ENCODE measurements at regions of chr10 and their contacts with region 1.

Region 1: GRCh38 chr10:68901104-68901927 is at the start of gene DDX50:
- DNase-seq: peak; percentile 100
- H3K4me3 ChIP-seq: peak within 1 kb of the TSS; percentile 67
- H3K4me3 Mint-ChIP-seq: peak within 1 kb of the TSS; percentile 96
- H3K27ac Mint-ChIP-seq: peak within 1 kb of the TSS; percentile 99
- H3K4me1 ChIP-seq: peaks cover 12% of the 10 kb centered on the region
- H3K4me1 Mint-ChIP-seq: peaks cover 40% of the 10 kb centered on the region
- H3K27me3 ChIP-seq: no peaks in the 10 kb centered on the region
- H3K27me3 Mint-ChIP-seq: no peaks in the 10 kb centered on the region
- CTCF ChIP-seq: peak; percentile 51 to 52
- total RNA-seq, gene DDX50: 76.7 and 81.4 TPM in 2 replicates

Region 2: GRCh38 chr10:68471586-68472408 is 429.5 kb before region 1 on chr10 and contains the start of gene DNA2:
- CTCF ChIA-PET with region 1: no interaction called
- POLR2A ChIA-PET with region 1: no interaction called
- intact Hi-C with region 1: loop called (anchors 5 kb)
- DNase-seq: peak; percentile 96 to 97
- H3K4me3 ChIP-seq: peak within 1 kb of the TSS; percentile 79
- H3K4me3 Mint-ChIP-seq: peak within 1 kb of the TSS; percentile 93
- H3K27ac Mint-ChIP-seq: peak within 1 kb of the TSS; percentile 98
- H3K4me1 ChIP-seq: peaks cover 13% of the 10 kb centered on the region
- H3K4me1 Mint-ChIP-seq: peaks cover 23% of the 10 kb centered on the region
- H3K27me3 ChIP-seq: no peaks in the 10 kb centered on the region
- H3K27me3 Mint-ChIP-seq: no peaks in the 10 kb centered on the region
- CTCF ChIP-seq: no peak
- total RNA-seq, gene DNA2: 85.5 and 88.1 TPM in 2 replicates

Region 3: DNA sequence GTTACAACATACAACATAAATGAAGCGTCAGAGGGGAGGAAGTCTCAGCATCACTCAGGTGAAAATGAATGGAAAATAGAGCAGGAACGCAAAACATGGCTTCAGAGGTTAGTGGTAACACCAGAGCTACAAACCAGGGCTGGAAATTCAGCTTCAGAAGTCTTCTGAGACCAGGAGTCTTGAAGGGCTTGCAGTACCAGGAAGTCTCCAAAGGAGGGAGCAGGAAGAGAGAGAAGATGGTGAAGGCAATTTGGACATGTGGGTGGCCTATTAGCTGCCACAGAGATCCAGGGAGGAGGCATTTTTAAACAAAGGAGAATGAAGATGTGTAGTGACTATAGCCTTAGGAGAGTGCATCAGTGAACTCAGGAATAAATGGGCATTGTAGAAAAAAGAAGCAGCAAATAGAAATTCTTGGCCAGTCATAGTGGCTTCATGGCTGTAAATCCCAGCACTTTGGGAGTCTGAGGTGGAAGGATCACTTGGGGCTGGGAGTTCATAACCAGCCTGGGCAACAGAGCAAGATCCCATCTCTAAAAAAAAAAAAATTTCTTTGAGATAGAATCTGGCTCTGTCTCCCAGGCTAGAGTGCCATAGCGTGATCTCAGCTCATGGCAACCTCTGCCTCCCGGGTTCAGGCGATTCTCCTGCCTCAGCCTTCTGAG is 350.4 kb before region 1 on chr10:
- CTCF ChIA-PET with region 1: no interaction called
- POLR2A ChIA-PET with region 1: no interaction called
- intact Hi-C with region 1: loop called (anchors 1 kb)
- DNase-seq: peak; percentile 84
- H3K4me3 ChIP-seq: no peak overlapping the region
- H3K4me3 Mint-ChIP-seq: no peak overlapping the region
- H3K27ac Mint-ChIP-seq: no peak overlapping the region
- H3K4me1 ChIP-seq: peaks cover 18% of the 10 kb centered on the region; the same call in 1 of the 2 replicates
- H3K4me1 Mint-ChIP-seq: peaks cover 14% of the 10 kb centered on the region
- H3K27me3 ChIP-seq: no peaks in the 10 kb centered on the region
- H3K27me3 Mint-ChIP-seq: no peaks in the 10 kb centered on the region
- CTCF ChIP-seq: peak; percentile 92 to 97

Region 4: DNA sequence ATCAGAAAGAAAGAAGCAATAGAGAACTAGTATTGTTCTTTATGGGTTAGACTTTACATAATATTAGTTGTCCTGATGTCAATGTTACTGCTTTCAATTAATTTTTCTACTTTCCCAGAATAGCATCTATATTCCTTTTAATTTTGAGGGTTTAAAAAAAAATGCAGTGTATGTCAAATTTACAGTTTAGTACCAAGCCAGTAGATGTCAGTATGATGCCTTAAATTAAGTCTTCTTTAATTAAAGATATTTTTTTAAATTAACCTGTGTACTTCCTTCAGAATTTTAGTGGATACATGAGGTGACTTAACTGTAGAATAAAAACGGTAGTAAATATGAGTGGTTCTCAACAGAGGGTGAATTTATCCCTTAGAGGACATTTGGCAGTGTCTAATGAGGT is 109.2 kb before region 1 on chr10:
- CTCF ChIA-PET with region 1: no interaction called
- POLR2A ChIA-PET with region 1: no interaction called
- intact Hi-C with region 1: loop called (anchors 1 kb)
- DNase-seq: no peak
- H3K4me3 ChIP-seq: no peak overlapping the region
- H3K4me3 Mint-ChIP-seq: no peak overlapping the region
- H3K27ac Mint-ChIP-seq: no peak overlapping the region
- H3K4me1 ChIP-seq: no peaks in the 10 kb centered on the region
- H3K4me1 Mint-ChIP-seq: no peaks in the 10 kb centered on the region
- H3K27me3 ChIP-seq: no peaks in the 10 kb centered on the region
- H3K27me3 Mint-ChIP-seq: no peaks in the 10 kb centered on the region
- CTCF ChIP-seq: peak in 1 of 2 experiments; percentile 8

Region 5: GRCh38 chr10:68955832-68956532 is 54.7 kb after region 1 on chr10 and contains the start of gene DDX21:
- CTCF ChIA-PET with region 1: interaction called, 3 read pairs
- POLR2A ChIA-PET with region 1: interaction called, 6 read pairs
- intact Hi-C with region 1: loop called (anchors 1 kb)
- DNase-seq: peak; percentile 96 to 97
- H3K4me3 ChIP-seq: peak within 1 kb of the TSS; percentile 95
- H3K4me3 Mint-ChIP-seq: peak within 1 kb of the TSS; percentile 92
- H3K27ac Mint-ChIP-seq: peak within 1 kb of the TSS; percentile 97
- H3K4me1 ChIP-seq: peaks cover 11% of the 10 kb centered on the region
- H3K4me1 Mint-ChIP-seq: no peaks in the 10 kb centered on the region
- H3K27me3 ChIP-seq: no peaks in the 10 kb centered on the region
- H3K27me3 Mint-ChIP-seq: no peaks in the 10 kb centered on the region
- CTCF ChIP-seq: peak; percentile 88 to 96
- total RNA-seq, gene DDX21: 239 and 243 TPM in 2 replicates

Region 6: GRCh38 chr10:69101451-69102095 is 200.3 kb after region 1 on chr10:
- CTCF ChIA-PET with region 1: no interaction called
- POLR2A ChIA-PET with region 1: no interaction called
- intact Hi-C with region 1: no loop called
- DNase-seq: peak in 1 of 2 experiments; percentile 22
- H3K4me3 ChIP-seq: no peak overlapping the region
- H3K4me3 Mint-ChIP-seq: no peak overlapping the region
- H3K27ac Mint-ChIP-seq: no peak overlapping the region
- H3K4me1 ChIP-seq: no peaks in the 10 kb centered on the region
- H3K4me1 Mint-ChIP-seq: no peaks in the 10 kb centered on the region
- H3K27me3 ChIP-seq: no peaks in the 10 kb centered on the region
- H3K27me3 Mint-ChIP-seq: peaks cover 23% of the 10 kb centered on the region
- CTCF ChIP-seq: no peak